CD14-positive monocyte (primary cell): ENCODE measurements at regions of chr5 and their contacts with region 1.

Region 1: DNA sequence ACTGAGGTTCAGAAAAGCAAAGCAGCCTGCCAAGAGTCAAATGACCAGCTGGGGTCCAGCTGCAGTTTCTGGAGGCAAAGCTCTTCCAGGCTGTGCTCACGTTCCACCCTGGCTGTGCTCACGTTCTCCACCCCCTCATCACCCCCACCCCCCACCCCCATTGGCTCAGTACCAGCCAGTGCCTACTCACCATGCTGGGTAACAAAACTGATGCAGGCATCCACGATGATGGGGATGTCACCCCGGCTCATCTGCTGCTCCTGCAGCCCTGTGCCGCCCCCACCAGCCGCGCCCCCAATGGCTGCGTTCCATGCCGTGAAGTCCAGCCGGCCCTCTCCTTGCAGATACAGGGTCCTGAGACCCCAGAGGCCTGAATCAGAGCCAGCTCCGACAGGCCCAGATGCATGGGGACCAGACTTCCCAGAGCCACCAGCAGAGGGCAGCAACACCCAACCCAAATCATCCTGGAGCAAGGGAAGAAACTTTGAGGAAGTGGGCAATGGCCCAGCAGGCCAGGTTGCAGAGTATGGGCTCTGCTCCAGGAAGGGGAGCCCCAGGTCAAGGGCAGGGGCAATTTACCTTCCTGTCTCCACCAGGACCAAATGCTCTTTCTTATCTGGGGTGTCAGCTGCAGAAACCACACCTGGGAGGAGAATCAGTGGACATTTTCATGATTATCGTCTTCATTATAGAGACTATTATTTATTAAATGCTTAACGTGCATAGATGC is 13.7 kb upstream of the FCHSD1 start:
- DNase-seq: peak; percentile 77 to 85 (median 82)
- H3K4me3 ChIP-seq: no peak overlapping the region
- H3K4me3 Mint-ChIP-seq: no peak overlapping the region
- H3K27ac ChIP-seq: no peak overlapping the region
- H3K27ac Mint-ChIP-seq: peak overlapping the region in 1 of 7 donors; percentile 28
- H3K4me1 ChIP-seq: peaks cover 5 to 6% of the 10 kb centered on the region in 2 donors
- H3K4me1 Mint-ChIP-seq: peaks cover 4% of the 10 kb centered on the region
- H3K27me3 ChIP-seq: no peaks in the 10 kb centered on the region
- H3K27me3 Mint-ChIP-seq: peaks cover 0 to 2% (median 1%) of the 10 kb centered on the region in 3 donors
- CTCF ChIP-seq: peak; percentile 88

Region 2: GRCh38 chr5:141387233-141387949 is 277.5 kb before region 1 on chr5 and contains the start of gene PCDHGB4:
- intact Hi-C with region 1: no loop called
- DNase-seq: no peak
- H3K4me3 ChIP-seq: peak within 1 kb of the TSS in 1 of 3 experiments; percentile 20
- H3K4me3 Mint-ChIP-seq: peak within 1 kb of the TSS; percentile 65 to 76
- H3K27ac ChIP-seq: no peak within 1 kb of the TSS
- H3K27ac Mint-ChIP-seq: no peak within 1 kb of the TSS
- H3K4me1 ChIP-seq: no peaks in the 10 kb centered on the region
- H3K4me1 Mint-ChIP-seq: peaks cover 6% of the 10 kb centered on the region
- H3K27me3 ChIP-seq: peaks cover 43 to 96% of the 10 kb centered on the region in 2 donors
- H3K27me3 Mint-ChIP-seq: peaks cover 45 to 79% (median 77%) of the 10 kb centered on the region in 3 donors
- CTCF ChIP-seq: no peak
- polyA plus RNA-seq, gene PCDHGB4: not detected

Region 3: DNA sequence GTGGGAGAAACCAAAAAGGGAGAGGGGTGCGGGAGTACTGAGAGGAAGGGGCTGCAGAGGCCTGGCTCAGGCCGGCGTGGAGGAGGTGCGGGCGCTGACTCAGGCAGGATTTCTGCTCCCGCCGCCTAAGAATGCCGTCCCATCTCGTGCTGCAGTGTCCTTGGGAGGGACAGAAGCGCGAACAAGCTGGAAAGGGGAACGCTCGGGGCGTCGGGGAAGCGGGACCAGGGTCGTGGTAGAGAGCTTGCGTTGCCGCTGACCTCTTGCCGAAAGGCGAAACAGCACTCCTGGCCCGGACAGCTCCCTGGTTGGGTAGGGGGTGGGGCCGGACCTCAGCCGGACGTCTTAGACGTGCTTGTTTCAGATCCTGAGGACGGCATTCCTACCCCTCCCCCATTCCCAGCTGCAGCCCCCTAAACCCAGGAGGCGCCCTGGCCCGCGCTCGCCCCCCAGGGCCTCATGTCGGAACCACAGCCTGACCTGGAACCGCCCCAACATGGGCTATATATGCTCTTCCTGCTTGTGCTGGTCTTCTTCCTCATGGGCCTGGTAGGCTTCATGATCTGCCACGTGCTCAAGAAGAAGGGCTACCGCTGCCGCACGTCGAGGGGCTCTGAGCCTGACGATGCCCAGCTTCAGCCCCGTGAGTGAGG is 27.0 kb before region 1 on chr5:
- intact Hi-C with region 1: no loop called
- DNase-seq: peak; percentile 41 to 60 (median 57)
- H3K4me3 ChIP-seq: peak overlapping the region; percentile 59 to 93 (median 86)
- H3K4me3 Mint-ChIP-seq: peak overlapping the region; percentile 87 to 91
- H3K27ac ChIP-seq: no peak overlapping the region
- H3K27ac Mint-ChIP-seq: peak overlapping the region in 4 of 7 donors; percentile 11 to 81 (median 62)
- H3K4me1 ChIP-seq: peaks cover 41 to 55% of the 10 kb centered on the region in 2 donors
- H3K4me1 Mint-ChIP-seq: peaks cover 39% of the 10 kb centered on the region
- H3K27me3 ChIP-seq: no peaks in the 10 kb centered on the region
- H3K27me3 Mint-ChIP-seq: peaks cover 0 to 4% (median 0%) of the 10 kb centered on the region in 3 donors
- CTCF ChIP-seq: peak; percentile 72

Region 4: GRCh38 chr5:141811287-141812155 is 146.6 kb after region 1 on chr5:
- intact Hi-C with region 1: loop called in 1 of 2 experiments (anchors 10 kb)
- DNase-seq: peak in 2 of 3 donors; percentile 17 to 25
- H3K4me3 ChIP-seq: no peak overlapping the region
- H3K4me3 Mint-ChIP-seq: peak overlapping the region; percentile 11 to 24
- H3K27ac ChIP-seq: no peak overlapping the region
- H3K27ac Mint-ChIP-seq: no peak overlapping the region
- H3K4me1 ChIP-seq: no peaks in the 10 kb centered on the region
- H3K4me1 Mint-ChIP-seq: no peaks in the 10 kb centered on the region
- H3K27me3 ChIP-seq: peaks cover 2 to 29% of the 10 kb centered on the region in 2 donors
- H3K27me3 Mint-ChIP-seq: peaks cover 30 to 48% (median 46%) of the 10 kb centered on the region in 3 donors
- CTCF ChIP-seq: peak; percentile 63

Region 5: GRCh38 chr5:141825791-141826560 is 161.1 kb after region 1 on chr5:
- intact Hi-C with region 1: loop called in 1 of 2 experiments (anchors 5 kb)
- DNase-seq: no peak
- H3K4me3 ChIP-seq: no peak overlapping the region
- H3K4me3 Mint-ChIP-seq: peak overlapping the region in 1 of 2 donors; percentile 36
- H3K27ac ChIP-seq: no peak overlapping the region
- H3K27ac Mint-ChIP-seq: no peak overlapping the region
- H3K4me1 ChIP-seq: no peaks in the 10 kb centered on the region
- H3K4me1 Mint-ChIP-seq: no peaks in the 10 kb centered on the region
- H3K27me3 ChIP-seq: no peaks in the 10 kb centered on the region
- H3K27me3 Mint-ChIP-seq: peaks cover 13 to 31% (median 17%) of the 10 kb centered on the region in 3 donors
- CTCF ChIP-seq: peak; percentile 42